PC-9 (cell line): ENCODE measurements at regions of chrX and their contacts with region 1.

Region 1: GRCh38 chrX:17374619-17375366 is at the start of gene NHS:
- DNase-seq: peak; percentile 51 to 73
- H3K4me3 ChIP-seq: peak within 1 kb of the TSS; percentile 83
- H3K27ac ChIP-seq: 0 out of 2 replicates have a peak within 1 kb of the TSS, but pooled peaks have one; percentile 16
- H3K4me1 ChIP-seq: peaks cover 14% of the 10 kb centered on the region
- H3K27me3 ChIP-seq: no peaks in the 10 kb centered on the region
- CTCF ChIP-seq: peak; percentile 53
- total RNA-seq, gene NHS: 6.0 and 6.7 TPM in 2 replicates

Region 2: DNA sequence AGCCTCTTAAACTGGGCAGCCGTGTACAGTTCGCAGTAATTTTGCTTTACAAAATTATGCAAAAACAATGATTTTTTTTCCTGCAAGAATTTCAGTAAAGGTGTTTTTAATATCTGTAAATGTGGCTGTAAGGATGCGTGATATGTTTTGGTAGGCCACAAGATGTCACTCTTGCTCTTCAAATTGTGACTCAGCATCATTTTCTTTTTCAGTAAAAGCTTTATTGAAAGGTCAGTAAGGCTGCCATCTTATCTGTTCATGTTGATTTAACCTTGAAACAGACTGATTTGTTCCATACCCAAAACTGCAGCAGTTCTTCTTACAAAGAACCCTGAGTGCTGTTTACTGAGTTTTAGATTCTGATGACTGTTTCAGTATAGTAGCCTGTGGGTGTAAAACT is 548.6 kb before region 1 on chrX:
- CTCF ChIA-PET with region 1: no interaction called
- POLR2A ChIA-PET with region 1: no interaction called
- intact Hi-C with region 1: loop called (anchors 2 kb)
- DNase-seq: peak in 1 of 2 experiments; percentile 46
- H3K4me3 ChIP-seq: no peak overlapping the region
- H3K27ac ChIP-seq: no peak overlapping the region
- H3K4me1 ChIP-seq: no peaks in the 10 kb centered on the region; the same call in 1 of the 2 replicates
- H3K27me3 ChIP-seq: no peaks in the 10 kb centered on the region
- CTCF ChIP-seq: peak; percentile 67

Region 3: GRCh38 chrX:17323376-17323775 is 51.4 kb before region 1 on chrX:
- CTCF ChIA-PET with region 1: no interaction called
- POLR2A ChIA-PET with region 1: no interaction called
- intact Hi-C with region 1: no loop called
- DNase-seq: no peak
- H3K4me3 ChIP-seq: no peak overlapping the region
- H3K27ac ChIP-seq: no peak overlapping the region
- H3K4me1 ChIP-seq: no peaks in the 10 kb centered on the region
- H3K27me3 ChIP-seq: no peaks in the 10 kb centered on the region
- CTCF ChIP-seq: no peak

Region 4: GRCh38 chrX:17413228-17413627 is 38.4 kb after region 1 on chrX:
- CTCF ChIA-PET with region 1: no interaction called
- POLR2A ChIA-PET with region 1: no interaction called
- intact Hi-C with region 1: loop called (anchors 1 kb)
- DNase-seq: peak in 1 of 2 experiments; percentile 82
- H3K4me3 ChIP-seq: peak overlapping the region; percentile 44; the same call in 1 of the 2 replicates
- H3K27ac ChIP-seq: peak overlapping the region; percentile 90
- H3K4me1 ChIP-seq: peaks cover 48% of the 10 kb centered on the region
- H3K27me3 ChIP-seq: no peaks in the 10 kb centered on the region
- CTCF ChIP-seq: no peak

Region 5: DNA sequence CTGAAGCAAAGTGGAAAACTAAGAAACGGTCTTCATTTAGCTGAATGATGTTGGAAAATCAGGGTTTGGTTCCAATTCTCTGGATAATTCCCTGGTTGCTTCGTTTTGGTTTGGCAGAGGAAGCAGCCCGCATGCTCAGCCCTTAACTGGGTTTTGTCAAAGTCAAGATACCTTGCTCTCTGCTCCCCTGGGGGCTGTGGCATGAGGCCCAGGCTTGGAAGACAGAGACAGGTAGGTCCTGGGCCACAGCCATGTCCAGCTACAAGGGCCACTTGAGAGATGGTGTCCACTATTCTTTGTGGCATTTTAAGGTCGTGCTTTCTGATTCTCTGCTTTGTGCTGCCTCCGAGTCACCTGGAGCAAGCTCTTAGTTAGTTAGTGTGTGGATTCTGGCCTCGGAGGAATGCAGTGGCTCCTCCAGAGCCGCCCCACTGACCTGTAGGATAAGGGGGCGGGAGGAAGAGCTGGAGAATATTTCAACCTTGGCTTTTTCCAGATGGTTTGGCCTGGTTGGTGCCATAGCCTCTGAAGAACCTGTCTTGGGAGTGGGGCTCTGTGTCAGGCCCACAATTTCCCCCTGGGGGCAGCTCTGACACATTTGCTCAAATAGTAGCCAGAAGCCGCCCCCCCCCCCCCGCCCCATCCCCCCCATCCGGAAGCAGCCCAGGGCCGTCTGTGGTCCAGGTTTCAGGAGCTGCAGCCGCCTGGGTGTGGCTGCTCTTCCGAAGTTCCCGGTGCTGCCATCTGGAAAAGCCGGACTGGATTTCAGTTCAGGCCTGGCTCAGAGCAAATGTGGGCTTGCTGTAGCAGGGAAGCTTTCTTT is 147.3 kb after region 1 on chrX:
- CTCF ChIA-PET with region 1: no interaction called
- POLR2A ChIA-PET with region 1: no interaction called
- intact Hi-C with region 1: loop called (anchors 1 kb)
- DNase-seq: peak; percentile 52 to 79
- H3K4me3 ChIP-seq: no peak overlapping the region
- H3K27ac ChIP-seq: peak overlapping the region; percentile 76
- H3K4me1 ChIP-seq: peaks cover 33% of the 10 kb centered on the region
- H3K27me3 ChIP-seq: no peaks in the 10 kb centered on the region
- CTCF ChIP-seq: no peak

Region 6: GRCh38 chrX:17590892-17591740 is 216.3 kb after region 1 on chrX:
- CTCF ChIA-PET with region 1: no interaction called
- POLR2A ChIA-PET with region 1: no interaction called
- intact Hi-C with region 1: loop called (anchors 1 kb)
- DNase-seq: peak; percentile 58 to 72
- H3K4me3 ChIP-seq: no peak overlapping the region; the same call in 1 of the 2 replicates
- H3K27ac ChIP-seq: peak overlapping the region; percentile 82
- H3K4me1 ChIP-seq: peaks cover 57% of the 10 kb centered on the region
- H3K27me3 ChIP-seq: no peaks in the 10 kb centered on the region
- CTCF ChIP-seq: peak; percentile 85